CD4-positive, alpha-beta T cell (primary cell): ENCODE measurements at regions of chr2 and their contacts with region 1.

Region 1: DNA sequence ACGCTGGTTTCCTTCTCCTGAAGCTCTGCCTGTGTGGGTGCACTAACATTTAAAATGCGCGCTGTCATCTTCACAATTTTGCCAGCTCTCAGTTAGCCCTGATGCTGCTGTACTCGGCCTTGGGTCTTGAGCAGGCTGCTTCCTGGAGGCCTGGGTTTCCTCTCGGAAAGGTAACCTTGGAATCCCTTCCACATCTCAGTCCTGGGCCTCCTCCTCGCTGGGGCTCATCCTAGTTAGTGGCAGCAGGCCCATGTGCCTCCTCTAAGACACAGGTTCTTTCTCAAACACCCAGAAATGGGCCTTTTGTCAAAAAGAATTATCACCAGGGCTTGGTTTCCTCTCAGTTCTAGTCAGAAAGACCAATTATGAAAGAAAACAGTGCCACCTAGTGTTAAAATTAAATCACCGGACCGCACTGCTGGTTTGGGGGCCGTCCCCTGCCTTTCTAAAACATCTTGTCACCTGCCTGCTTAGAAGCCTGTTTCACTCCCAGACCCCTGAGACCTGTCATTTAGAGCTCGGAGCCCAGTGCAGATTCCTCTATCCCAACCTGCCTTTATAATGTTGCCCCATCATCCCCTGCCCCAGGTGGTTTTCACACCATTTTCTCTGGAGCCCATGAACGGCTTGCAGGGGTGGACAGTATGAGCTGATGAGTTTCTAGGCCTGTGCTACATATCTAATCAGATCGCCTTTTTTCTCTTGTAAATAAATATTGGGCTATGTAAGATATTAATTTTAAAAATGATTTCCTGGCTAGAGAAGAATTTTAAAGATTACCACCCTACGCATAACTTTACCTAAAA is 42.4 kb downstream of the HK2 start:
- DNase-seq: peak; percentile 6 to 79 (median 34)
- ATAC-seq: peak; percentile 80
- H3K4me3 ChIP-seq: no peak overlapping the region
- H3K4me3 Mint-ChIP-seq: no peak overlapping the region
- H3K27ac ChIP-seq: no peak overlapping the region
- H3K27ac Mint-ChIP-seq: no peak overlapping the region
- H3K4me1 ChIP-seq: peaks cover 6% of the 10 kb centered on the region
- H3K4me1 Mint-ChIP-seq: peaks cover 7% of the 10 kb centered on the region
- H3K27me3 ChIP-seq: no peaks in the 10 kb centered on the region
- H3K27me3 Mint-ChIP-seq: no peaks in the 10 kb centered on the region
- CTCF ChIP-seq: peak; percentile 72

Region 2: GRCh38 chr2:74715078-74715791 is 161.0 kb before region 1 on chr2:
- CTCF ChIA-PET with region 1: interaction called, 8 read pairs
- POLR2A ChIA-PET with region 1: interaction called, 3 read pairs
- intact Hi-C with region 1: loop called (anchors 1 kb)
- DNase-seq: peak; percentile 62 to 87 (median 74)
- ATAC-seq: peak; percentile 91
- H3K4me3 ChIP-seq: peak overlapping the region; percentile 35
- H3K4me3 Mint-ChIP-seq: peak overlapping the region; percentile 86
- H3K27ac ChIP-seq: no peak overlapping the region
- H3K27ac Mint-ChIP-seq: no peak overlapping the region
- H3K4me1 ChIP-seq: peaks cover 5% of the 10 kb centered on the region
- H3K4me1 Mint-ChIP-seq: peaks cover 9% of the 10 kb centered on the region
- H3K27me3 ChIP-seq: peaks cover 9 to 26% of the 10 kb centered on the region in 2 experiments
- H3K27me3 Mint-ChIP-seq: peaks cover 12% of the 10 kb centered on the region
- CTCF ChIP-seq: peak; percentile 82

Region 3: DNA sequence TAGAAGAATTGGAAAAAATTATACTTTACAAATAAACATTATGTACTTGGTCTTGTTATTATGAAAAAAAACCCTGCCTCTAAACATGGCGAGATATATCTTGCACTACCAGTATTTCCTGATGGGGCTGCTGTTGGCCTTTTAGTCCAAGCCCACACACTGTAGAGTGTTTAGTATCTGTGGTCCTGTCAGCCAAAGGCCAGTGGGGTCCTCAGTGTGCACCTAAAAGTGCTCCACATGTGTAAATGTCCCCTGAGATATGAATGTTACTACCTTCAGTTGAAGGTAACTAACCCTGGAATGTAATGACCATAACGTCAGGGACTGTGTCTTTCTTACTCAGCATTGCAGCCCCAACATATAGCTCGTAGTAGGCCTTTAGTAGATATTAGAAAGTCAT is 113.5 kb before region 1 on chr2:
- CTCF ChIA-PET with region 1: interaction called, 4 read pairs
- POLR2A ChIA-PET with region 1: no interaction called
- intact Hi-C with region 1: loop called in 1 of 2 experiments (anchors 2 kb)
- DNase-seq: peak in 2 of 14 experiments; percentile 11 to 19
- ATAC-seq: no peak
- H3K4me3 ChIP-seq: no peak overlapping the region
- H3K4me3 Mint-ChIP-seq: no peak overlapping the region
- H3K27ac ChIP-seq: no peak overlapping the region
- H3K27ac Mint-ChIP-seq: no peak overlapping the region
- H3K4me1 ChIP-seq: peaks cover 7% of the 10 kb centered on the region
- H3K4me1 Mint-ChIP-seq: peaks cover 15% of the 10 kb centered on the region
- H3K27me3 ChIP-seq: no peaks in the 10 kb centered on the region
- H3K27me3 Mint-ChIP-seq: peaks cover 3% of the 10 kb centered on the region
- CTCF ChIP-seq: no peak

Region 4: DNA sequence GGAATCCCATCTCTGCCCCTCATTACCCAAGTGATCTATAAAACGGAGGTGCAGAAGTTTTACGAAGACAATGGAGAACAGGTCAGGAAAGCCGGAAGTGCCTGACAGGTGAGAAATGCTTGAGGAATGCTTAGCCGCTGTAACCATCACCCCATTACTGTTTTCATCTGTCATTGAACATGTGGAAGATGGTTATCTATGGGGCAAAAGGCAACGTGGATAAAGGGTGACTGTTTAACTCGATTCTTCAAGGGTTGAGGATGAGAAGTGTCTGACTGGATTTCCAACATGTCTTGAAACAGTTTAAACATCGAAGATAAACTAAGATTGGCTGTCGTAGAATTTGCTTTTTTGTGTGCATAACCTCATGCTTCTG is 25.1 kb before region 1 on chr2:
- CTCF ChIA-PET with region 1: interaction called, 7 read pairs
- POLR2A ChIA-PET with region 1: interaction called, 8 read pairs
- intact Hi-C with region 1: loop called in 1 of 2 experiments (anchors 2 kb)
- DNase-seq: no peak
- ATAC-seq: no peak
- H3K4me3 ChIP-seq: no peak overlapping the region
- H3K4me3 Mint-ChIP-seq: no peak overlapping the region
- H3K27ac ChIP-seq: peak overlapping the region in 1 of 2 donors; percentile 90
- H3K27ac Mint-ChIP-seq: peak overlapping the region; percentile 98
- H3K4me1 ChIP-seq: peaks cover 69% of the 10 kb centered on the region
- H3K4me1 Mint-ChIP-seq: peaks cover 70% of the 10 kb centered on the region
- H3K27me3 ChIP-seq: no peaks in the 10 kb centered on the region
- H3K27me3 Mint-ChIP-seq: no peaks in the 10 kb centered on the region
- CTCF ChIP-seq: no peak